ENCODE measurements at regions of chr2 and their contacts with region 1.

Region 1: DNA sequence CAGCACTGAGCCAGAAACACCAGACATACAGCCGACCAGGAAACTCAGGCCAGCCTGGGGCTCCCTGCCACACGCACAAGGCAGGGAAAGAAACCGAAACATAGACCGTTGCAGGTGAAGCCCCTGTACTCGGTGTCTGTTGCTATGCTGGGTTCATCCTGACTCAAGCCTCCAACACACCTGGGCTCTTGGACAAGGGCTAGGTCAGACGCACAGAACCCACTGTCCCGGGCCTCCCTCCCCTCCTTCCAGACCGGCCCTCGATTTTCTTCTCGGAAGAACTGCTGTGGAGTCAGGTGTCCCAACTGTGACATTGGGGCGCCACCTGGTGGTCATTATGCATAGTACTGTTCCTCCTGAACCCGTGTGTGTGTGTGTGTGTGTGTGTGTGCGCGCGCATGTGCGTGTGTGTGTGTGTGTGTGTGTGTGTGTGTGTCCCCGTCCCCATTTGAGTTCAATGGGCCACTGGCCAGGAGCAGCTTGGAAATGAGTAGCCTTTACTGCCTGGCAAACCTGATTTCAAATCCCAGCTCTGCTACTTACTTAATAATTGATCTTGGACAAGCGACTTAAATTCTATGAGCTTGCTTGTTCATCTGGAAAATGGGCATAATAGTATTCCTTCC is 55.4 kb upstream of the GLI2 start:
- DNase-seq: peak; percentile 78
- ATAC-seq: peak; percentile 81
- H3K4me3 Mint-ChIP-seq: no peak overlapping the region
- H3K27ac Mint-ChIP-seq: no peak overlapping the region
- H3K4me1 Mint-ChIP-seq: no peaks in the 10 kb centered on the region
- H3K27me3 Mint-ChIP-seq: peaks cover 20% of the 10 kb centered on the region

Region 2: DNA sequence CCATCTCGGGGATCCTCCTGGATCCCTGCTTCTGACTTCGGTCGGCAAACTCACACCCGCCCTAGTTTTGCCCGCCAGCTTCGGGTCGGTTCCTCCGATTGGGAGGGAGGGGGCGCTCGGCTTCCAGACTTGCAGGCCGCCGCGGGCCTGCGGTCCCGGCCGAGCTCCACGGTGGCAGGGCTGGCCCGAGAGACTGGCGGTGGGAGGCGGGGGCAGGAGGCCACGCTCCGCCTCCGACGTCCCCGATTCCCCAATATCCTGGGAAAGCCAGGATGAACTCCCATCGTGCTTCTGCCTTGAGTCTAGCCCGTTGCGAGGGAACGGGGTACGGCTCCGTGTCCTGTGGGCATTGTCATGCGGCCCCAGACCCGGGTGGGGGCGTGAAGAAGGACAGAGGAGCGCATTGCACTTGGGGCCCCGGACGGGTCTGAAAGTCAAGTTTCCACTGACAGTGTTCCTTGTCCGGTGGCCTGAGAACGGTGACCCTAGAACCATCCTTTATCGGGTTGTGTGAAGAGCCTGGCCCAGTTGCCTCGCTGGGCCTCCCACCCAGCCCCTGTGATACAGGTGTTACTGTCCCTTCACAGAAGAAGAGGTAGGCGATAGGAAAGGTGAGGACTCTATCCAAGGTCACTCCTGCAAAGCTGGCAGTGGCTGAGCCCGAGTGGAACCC is 336.7 kb before region 1 on chr2:
- CTCF ChIA-PET with region 1: interaction called, 16 read pairs
- DNase-seq: peak; percentile 64
- ATAC-seq: peak; percentile 54
- H3K4me3 Mint-ChIP-seq: no peak overlapping the region
- H3K27ac Mint-ChIP-seq: no peak overlapping the region
- H3K4me1 Mint-ChIP-seq: peaks cover 15% of the 10 kb centered on the region
- H3K27me3 Mint-ChIP-seq: peaks cover 64% of the 10 kb centered on the region

Region 3: GRCh38 chr2:120596990-120597594 is 83.2 kb before region 1 on chr2:
- CTCF ChIA-PET with region 1: no interaction called
- DNase-seq: no peak
- ATAC-seq: no peak
- H3K4me3 Mint-ChIP-seq: no peak overlapping the region
- H3K27ac Mint-ChIP-seq: no peak overlapping the region
- H3K4me1 Mint-ChIP-seq: no peaks in the 10 kb centered on the region
- H3K27me3 Mint-ChIP-seq: no peaks in the 10 kb centered on the region

Region 4: DNA sequence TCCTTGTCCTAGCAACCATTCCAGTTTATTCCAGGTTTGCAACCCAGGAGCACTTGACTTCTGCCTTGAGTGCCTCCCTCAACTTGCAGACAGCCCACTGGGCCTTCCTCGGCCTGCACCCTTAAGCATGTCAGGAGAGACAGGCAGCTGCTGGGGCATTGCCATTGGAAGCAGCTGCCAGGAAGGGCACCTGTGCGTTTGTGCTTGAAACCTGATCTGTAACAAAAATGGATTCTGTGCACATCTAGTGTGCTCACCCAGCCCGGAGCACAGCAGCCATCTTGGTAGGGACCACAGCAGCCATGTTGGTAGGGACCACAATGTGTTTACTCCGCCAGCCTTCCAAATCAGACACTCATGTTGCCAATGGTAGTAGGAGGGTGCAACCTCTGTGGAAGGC is 11.2 kb after region 1 on chr2:
- CTCF ChIA-PET with region 1: interaction called, 10 read pairs
- DNase-seq: no peak
- ATAC-seq: no peak
- H3K4me3 Mint-ChIP-seq: no peak overlapping the region
- H3K27ac Mint-ChIP-seq: no peak overlapping the region
- H3K4me1 Mint-ChIP-seq: peaks cover 5% of the 10 kb centered on the region
- H3K27me3 Mint-ChIP-seq: peaks cover 22% of the 10 kb centered on the region

Region 5: GRCh38 chr2:120779781-120780283 is 99.6 kb after region 1 on chr2:
- CTCF ChIA-PET with region 1: no interaction called
- DNase-seq: no peak
- ATAC-seq: no peak
- H3K4me3 Mint-ChIP-seq: no peak overlapping the region
- H3K27ac Mint-ChIP-seq: no peak overlapping the region
- H3K4me1 Mint-ChIP-seq: peaks cover 4% of the 10 kb centered on the region
- H3K27me3 Mint-ChIP-seq: no peaks in the 10 kb centered on the region

Measured in activated CD8-positive, alpha-beta memory T cell treated with anti-CD3 and anti-CD28 coated beads, Interleukin-2, amount 10 ng/mL, durations not matched to agents 7 days and 5 days (primary cell).